IMR-90 (cell line): ENCODE measurements at regions of chr10 and their contacts with region 1.

Region 1: DNA sequence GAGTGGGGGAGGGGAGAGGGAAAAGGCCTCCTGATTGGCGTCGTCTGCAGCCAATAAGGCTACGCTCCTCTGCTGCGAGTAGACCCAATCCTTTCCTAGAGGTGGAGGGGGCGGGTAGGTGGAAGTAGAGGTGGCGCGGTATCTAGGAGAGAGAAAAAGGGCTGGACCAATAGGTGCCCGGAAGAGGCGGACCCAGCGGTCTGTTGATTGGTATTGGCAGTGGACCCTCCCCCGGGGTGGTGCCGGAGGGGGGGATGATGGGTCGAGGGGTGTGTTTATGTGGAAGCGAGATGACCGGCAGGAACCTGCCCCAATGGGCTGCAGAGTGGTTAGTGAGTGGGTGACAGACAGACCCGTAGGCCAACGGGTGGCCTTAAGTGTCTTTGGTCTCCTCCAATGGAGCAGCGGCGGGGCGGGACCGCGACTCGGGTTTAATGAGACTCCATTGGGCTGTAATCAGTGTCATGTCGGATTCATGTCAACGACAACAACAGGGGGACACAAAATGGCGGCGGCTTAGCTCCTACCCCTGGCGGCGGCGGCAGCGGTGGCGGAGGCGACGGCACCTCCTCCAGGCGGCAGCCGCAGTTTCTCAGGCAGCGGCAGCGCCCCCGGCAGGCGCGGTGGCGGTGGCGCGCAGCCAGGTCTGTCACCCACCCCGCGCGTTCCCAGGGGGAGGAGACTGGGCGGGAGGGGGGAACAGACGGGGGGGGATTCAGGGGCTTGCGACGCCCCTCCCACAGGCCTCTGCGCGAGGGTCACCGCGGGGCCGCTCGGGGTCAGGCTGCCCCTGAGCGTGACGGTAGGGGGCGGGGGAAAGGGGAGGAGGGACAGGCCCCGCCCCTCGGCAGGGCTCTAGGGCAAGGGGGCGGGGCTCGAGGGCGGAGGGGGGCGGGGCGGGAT is at the start of gene KAT6B:
- DNase-seq: peak; percentile 100
- ATAC-seq: peak; percentile 87
- H3K4me3 ChIP-seq: peak within 1 kb of the TSS; percentile 97
- H3K27ac ChIP-seq: peak within 1 kb of the TSS; percentile 87
- H3K4me1 ChIP-seq: peaks cover 20% of the 10 kb centered on the region
- H3K27me3 ChIP-seq: no peaks in the 10 kb centered on the region
- CTCF ChIP-seq: peak; percentile 33
- POLR2A ChIP-seq: peak; percentile 79; the same call in 1 of the 2 replicates
- RAD21 ChIP-seq: peak; percentile 26; the same call in 1 of the 2 replicates
- total RNA-seq, gene KAT6B: 27.8 and 28.1 TPM in 2 replicates

Region 2: GRCh38 chr10:74262856-74263255 is 563.5 kb before region 1 on chr10:
- CTCF ChIA-PET with region 1: no interaction called
- POLR2A ChIA-PET with region 1: interaction called, 6 read pairs
- dilution Hi-C with region 1: no loop called
- in situ Hi-C with region 1: no loop called
- intact Hi-C with region 1: loop called (anchors 1 kb)
- DNase-seq: no peak
- ATAC-seq: no peak
- H3K4me3 ChIP-seq: no peak overlapping the region
- H3K27ac ChIP-seq: no peak overlapping the region
- H3K4me1 ChIP-seq: peaks cover 2% of the 10 kb centered on the region; the same call in 1 of the 2 replicates
- H3K27me3 ChIP-seq: no peaks in the 10 kb centered on the region
- CTCF ChIP-seq: no peak
- POLR2A ChIP-seq: no peak
- RAD21 ChIP-seq: no peak

Region 3: DNA sequence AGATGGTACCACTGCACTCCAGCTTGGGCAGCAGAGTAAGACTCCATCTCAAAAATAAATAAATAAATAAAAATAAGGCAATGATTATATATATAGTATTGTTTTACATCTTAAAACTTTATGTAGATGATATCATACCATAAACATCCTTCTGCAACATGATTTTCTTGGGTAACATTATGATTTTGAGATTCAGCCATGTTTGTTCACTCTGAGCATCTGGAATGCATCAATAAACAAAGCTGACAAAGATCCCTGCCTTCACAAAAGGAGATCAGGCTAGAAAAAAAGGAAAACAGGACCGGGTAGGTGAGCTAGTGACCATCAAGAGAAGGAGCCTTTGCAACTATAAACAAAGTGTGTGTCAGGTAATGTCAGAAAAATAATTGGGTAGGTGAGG is 31.9 kb before region 1 on chr10:
- CTCF ChIA-PET with region 1: no interaction called
- POLR2A ChIA-PET with region 1: interaction called, 11 read pairs
- dilution Hi-C with region 1: no loop called
- in situ Hi-C with region 1: no loop called
- intact Hi-C with region 1: no loop called
- DNase-seq: no peak
- ATAC-seq: no peak
- H3K4me3 ChIP-seq: no peak overlapping the region
- H3K27ac ChIP-seq: no peak overlapping the region
- H3K4me1 ChIP-seq: no peaks in the 10 kb centered on the region
- H3K27me3 ChIP-seq: no peaks in the 10 kb centered on the region
- CTCF ChIP-seq: no peak
- POLR2A ChIP-seq: no peak
- RAD21 ChIP-seq: no peak

Region 4: GRCh38 chr10:74882831-74883230 is 56.4 kb after region 1 on chr10:
- CTCF ChIA-PET with region 1: no interaction called
- POLR2A ChIA-PET with region 1: interaction called, 7 read pairs
- dilution Hi-C with region 1: no loop called
- in situ Hi-C with region 1: no loop called
- intact Hi-C with region 1: loop called (anchors 5 kb)
- DNase-seq: peak; percentile 76
- ATAC-seq: peak; percentile 62
- H3K4me3 ChIP-seq: no peak overlapping the region
- H3K27ac ChIP-seq: peak overlapping the region; percentile 100
- H3K4me1 ChIP-seq: peaks cover 43% of the 10 kb centered on the region
- H3K27me3 ChIP-seq: no peaks in the 10 kb centered on the region
- CTCF ChIP-seq: no peak
- POLR2A ChIP-seq: no peak
- RAD21 ChIP-seq: no peak

Region 5: GRCh38 chr10:74924251-74924951 is 98.0 kb after region 1 on chr10:
- CTCF ChIA-PET with region 1: no interaction called
- POLR2A ChIA-PET with region 1: interaction called, 3 read pairs
- dilution Hi-C with region 1: no loop called
- in situ Hi-C with region 1: no loop called
- intact Hi-C with region 1: loop called (anchors 5 kb)
- DNase-seq: peak; percentile 97
- ATAC-seq: peak; percentile 76
- H3K4me3 ChIP-seq: peak overlapping the region; percentile 20; the same call in 1 of the 2 replicates
- H3K27ac ChIP-seq: peak overlapping the region; percentile 94
- H3K4me1 ChIP-seq: peaks cover 27% of the 10 kb centered on the region
- H3K27me3 ChIP-seq: no peaks in the 10 kb centered on the region
- CTCF ChIP-seq: no peak
- POLR2A ChIP-seq: no peak
- RAD21 ChIP-seq: no peak

Region 6: GRCh38 chr10:75029857-75030256 is 203.5 kb after region 1 on chr10:
- CTCF ChIA-PET with region 1: no interaction called
- POLR2A ChIA-PET with region 1: no interaction called
- dilution Hi-C with region 1: no loop called
- in situ Hi-C with region 1: no loop called
- intact Hi-C with region 1: loop called (anchors 10 kb)
- DNase-seq: peak; percentile 78
- ATAC-seq: peak; percentile 88
- H3K4me3 ChIP-seq: no peak overlapping the region
- H3K27ac ChIP-seq: peak overlapping the region; percentile 7; the same call in 1 of the 2 replicates
- H3K4me1 ChIP-seq: peaks cover 3% of the 10 kb centered on the region; the same call in 1 of the 2 replicates
- H3K27me3 ChIP-seq: no peaks in the 10 kb centered on the region
- CTCF ChIP-seq: no peak
- POLR2A ChIP-seq: no peak
- RAD21 ChIP-seq: no peak